Activated CD4-positive, alpha-beta memory T cell treated with anti-CD3 and anti-CD28 coated beads for 36 hours (primary cell): ENCODE measurements at regions of chr5 and their contacts with region 1.

Region 1: DNA sequence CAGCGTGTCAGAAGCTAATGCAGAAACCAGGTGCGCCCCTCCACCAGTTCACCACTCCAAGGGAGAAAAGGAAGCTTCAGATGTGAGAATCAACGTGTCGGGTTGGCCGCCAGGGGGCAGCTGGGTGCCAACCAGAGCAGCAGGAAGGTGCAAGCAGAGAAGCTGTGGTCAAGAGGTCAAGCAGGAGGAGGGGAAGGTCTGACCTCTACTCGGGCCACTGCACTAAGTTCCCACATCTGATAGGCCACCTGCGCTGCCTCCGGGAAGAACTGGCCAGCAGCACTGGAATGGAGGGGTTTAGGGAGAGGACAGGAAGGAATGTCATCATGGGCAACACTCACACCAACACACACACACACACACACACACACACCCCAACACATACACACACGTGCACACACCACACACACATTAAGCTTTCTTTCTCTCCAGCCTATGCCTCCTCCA is 31.4 kb downstream of the ANXA6 start:
- DNase-seq: peak; percentile 74
- H3K4me3 Mint-ChIP-seq: no peak overlapping the region
- H3K27ac Mint-ChIP-seq: peak overlapping the region; percentile 90
- H3K4me1 Mint-ChIP-seq: peaks cover 64% of the 10 kb centered on the region
- H3K27me3 Mint-ChIP-seq: no peaks in the 10 kb centered on the region

Region 2: DNA sequence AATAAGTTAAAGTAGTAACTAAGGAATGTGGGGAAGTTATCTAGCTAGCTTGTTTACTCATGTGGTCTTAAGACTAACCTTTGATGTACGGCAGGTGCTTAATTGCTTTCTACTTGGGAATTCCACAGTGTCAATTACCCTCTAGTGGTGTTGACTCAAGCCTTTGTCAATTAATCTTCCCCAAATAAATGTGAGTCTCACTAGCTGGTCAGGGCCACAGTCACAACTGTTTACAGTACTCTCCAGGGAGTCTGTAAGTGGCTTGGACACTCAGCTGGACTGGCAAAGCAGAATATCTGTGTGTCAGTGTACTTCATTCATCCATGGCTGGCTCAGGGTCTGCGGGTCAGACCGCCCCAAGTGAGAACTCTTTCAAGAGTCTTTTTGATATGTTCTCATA is 316.9 kb before region 1 on chr5:
- CTCF ChIA-PET with region 1: no interaction called
- POLR2A ChIA-PET with region 1: no interaction called
- intact Hi-C with region 1: no loop called
- DNase-seq: no peak
- H3K4me3 Mint-ChIP-seq: no peak overlapping the region
- H3K27ac Mint-ChIP-seq: no peak overlapping the region
- H3K4me1 Mint-ChIP-seq: peaks cover 3% of the 10 kb centered on the region
- H3K27me3 Mint-ChIP-seq: peaks cover 3% of the 10 kb centered on the region

Region 3: DNA sequence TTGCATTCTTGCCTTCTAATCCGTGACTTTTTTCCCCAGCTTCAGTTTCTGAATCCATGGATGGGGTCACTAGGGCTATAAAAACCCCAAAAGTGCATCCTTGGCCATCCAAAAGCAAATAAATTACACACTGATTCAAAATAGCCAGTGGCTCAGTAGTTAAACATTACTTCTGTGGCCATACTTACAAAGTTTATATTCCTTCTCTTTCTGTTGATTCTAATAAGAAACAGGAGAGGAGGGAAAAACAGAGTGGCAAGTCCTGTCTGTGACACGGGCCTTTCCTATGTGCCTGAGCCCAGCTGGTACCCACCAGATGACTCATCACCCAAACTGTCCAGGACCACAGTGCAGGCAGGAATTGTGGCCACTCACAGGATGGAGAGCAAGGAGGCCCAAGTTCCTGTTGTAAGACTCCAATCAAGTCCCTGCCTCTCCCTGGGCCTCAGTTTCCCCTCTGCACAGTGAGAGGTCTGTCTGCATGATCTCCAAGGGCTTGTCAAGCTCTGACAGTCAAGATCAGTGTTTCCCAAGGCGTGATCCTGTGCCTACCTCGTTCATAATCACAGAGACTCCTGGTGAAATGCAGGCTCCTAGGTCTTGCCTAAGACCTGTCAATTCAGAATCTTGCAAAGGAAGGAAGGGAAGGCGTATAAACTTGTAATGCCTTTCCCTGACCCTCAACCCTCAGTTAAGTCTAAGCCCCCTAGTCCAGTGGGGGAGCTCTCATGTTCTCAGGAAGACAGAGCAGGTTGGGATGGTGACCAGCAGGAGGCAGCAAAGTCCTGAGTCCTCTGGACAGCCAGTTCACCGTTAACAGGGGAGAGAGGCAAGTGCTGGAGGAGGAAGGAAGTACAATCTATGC is 74.9 kb before region 1 on chr5:
- CTCF ChIA-PET with region 1: interaction called, 12 read pairs
- POLR2A ChIA-PET with region 1: no interaction called
- intact Hi-C with region 1: no loop called
- DNase-seq: peak; percentile 79
- H3K4me3 Mint-ChIP-seq: no peak overlapping the region
- H3K27ac Mint-ChIP-seq: peak overlapping the region; percentile 67
- H3K4me1 Mint-ChIP-seq: peaks cover 15% of the 10 kb centered on the region
- H3K27me3 Mint-ChIP-seq: no peaks in the 10 kb centered on the region

Region 4: GRCh38 chr5:151107738-151108508 is 18.3 kb before region 1 on chr5:
- CTCF ChIA-PET with region 1: interaction called, 86 read pairs
- POLR2A ChIA-PET with region 1: no interaction called
- intact Hi-C with region 1: no loop called
- DNase-seq: no peak
- H3K4me3 Mint-ChIP-seq: no peak overlapping the region
- H3K27ac Mint-ChIP-seq: peak overlapping the region; percentile 8
- H3K4me1 Mint-ChIP-seq: no peaks in the 10 kb centered on the region
- H3K27me3 Mint-ChIP-seq: no peaks in the 10 kb centered on the region

Region 5: DNA sequence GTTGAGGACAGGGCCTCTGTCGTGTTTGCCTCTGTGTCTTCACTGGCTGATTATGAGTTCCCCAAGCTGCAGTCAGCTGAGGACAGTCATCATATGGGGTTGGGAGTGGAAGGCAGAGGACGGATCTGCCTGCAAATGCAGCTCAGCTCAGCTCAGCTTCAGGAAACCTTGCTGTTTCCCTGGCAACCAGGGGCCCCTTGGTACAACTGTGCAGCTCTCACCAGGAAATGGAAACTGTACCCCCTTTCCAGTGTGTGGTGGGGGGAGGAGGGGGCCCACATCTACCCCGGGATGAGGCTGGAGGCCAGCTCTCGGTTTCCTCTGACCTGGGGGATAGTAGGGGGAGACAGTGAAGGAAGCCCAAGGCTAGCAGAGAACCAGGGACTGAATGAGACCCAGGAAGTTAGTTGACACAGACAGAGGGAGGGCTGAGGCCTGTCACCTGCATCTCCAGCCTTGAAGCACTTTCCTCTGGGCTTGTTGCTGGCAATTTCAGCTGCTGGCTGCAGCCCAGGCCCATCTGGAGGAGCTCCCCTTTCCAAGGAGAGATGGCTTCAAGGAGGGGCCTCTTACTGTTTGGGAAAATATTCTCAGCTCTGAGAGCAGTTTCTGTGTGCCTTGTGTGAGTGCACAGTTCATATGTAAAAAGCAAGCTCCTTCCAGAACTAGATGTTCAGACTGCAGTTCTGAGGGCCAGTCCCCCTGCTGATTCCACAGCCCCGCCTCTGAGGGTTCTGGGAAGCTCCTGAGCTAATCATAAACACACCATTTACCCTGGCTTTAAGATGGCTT is 24.4 kb after region 1 on chr5:
- CTCF ChIA-PET with region 1: interaction called, 159 read pairs
- POLR2A ChIA-PET with region 1: interaction called, 8 read pairs
- intact Hi-C with region 1: loop called (anchors 1 kb)
- DNase-seq: peak; percentile 87
- H3K4me3 Mint-ChIP-seq: peak overlapping the region; percentile 36
- H3K27ac Mint-ChIP-seq: peak overlapping the region; percentile 90
- H3K4me1 Mint-ChIP-seq: peaks cover 94% of the 10 kb centered on the region
- H3K27me3 Mint-ChIP-seq: no peaks in the 10 kb centered on the region

Region 6: DNA sequence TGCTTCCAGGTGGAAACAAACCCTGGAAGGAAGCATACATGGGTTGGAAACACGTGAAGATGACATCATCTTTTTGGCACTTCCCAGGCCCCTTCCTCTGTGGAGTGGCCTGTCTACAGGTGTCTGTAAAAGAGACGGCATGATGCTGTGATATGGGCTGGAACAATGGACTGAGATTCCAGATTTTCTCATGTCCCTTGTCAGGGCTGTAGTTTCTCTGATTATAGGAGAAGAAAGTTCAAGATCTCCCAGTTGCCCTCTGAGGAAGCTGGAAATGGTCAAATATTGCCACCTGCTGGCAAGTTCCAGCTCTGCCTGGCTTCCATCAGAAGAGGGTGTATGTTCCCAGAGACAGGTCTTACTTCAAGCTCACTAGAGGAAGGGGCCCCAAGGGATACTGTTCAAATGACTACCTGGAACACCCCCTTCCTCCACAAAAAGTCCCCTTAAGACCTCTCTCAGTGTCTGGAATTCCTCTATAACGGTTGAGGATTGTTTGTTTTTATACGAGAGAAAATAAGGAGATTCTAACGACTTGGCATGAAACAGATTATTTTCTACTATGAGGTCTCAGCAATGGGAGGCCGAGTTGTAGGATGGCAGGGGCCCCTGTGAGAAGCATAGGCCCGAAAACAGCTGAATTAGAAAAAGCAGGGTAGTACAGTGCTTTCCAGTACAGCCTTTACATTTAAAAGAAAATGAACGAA is 38.6 kb after region 1 on chr5:
- CTCF ChIA-PET with region 1: interaction called, 553 read pairs
- POLR2A ChIA-PET with region 1: interaction called, 11 read pairs
- intact Hi-C with region 1: loop called (anchors 1 kb)
- DNase-seq: peak; percentile 90
- H3K4me3 Mint-ChIP-seq: no peak overlapping the region
- H3K27ac Mint-ChIP-seq: no peak overlapping the region
- H3K4me1 Mint-ChIP-seq: peaks cover 18% of the 10 kb centered on the region
- H3K27me3 Mint-ChIP-seq: no peaks in the 10 kb centered on the region

Region 7: DNA sequence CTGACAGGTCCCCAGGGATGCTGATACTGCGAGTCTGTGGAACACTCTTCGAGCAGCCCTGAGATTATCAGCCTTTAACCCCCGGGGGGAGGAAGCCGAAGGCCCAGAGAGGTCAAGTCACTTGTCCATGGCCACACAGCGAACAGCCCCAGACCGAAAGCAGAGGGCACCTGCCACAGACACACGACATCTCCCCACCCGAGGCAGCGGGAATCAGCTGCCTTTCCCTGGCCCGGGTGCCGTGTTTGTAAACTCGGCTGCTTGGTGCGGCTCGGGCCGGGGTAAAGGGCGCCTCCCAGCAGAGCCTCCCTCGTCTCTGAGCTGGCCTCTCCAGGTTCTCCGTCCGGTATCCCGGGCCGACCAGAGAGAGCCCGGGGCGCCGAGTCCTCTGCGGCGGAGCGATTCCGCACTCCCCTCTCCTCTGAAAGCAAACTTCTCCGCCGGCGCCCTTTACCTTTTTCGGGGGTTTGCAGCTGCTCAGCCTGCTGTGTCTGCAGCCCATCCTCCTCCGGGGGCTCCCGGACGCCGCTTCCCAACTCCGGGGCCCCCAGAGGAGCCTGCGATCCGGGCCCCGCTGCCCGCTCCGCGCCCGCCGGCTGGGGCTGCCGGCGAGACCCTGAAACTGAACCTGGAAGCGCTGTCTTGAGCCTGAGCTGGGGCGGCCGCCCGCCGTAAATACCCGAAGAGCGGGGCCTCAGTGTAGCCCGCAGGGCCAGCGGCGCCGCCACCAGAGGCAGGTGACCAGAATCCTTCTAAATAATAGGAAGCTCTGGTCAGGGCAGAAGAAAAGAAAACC is 97.4 kb after region 1 on chr5 and contains the start of gene CCDC69:
- CTCF ChIA-PET with region 1: interaction called, 15 read pairs
- POLR2A ChIA-PET with region 1: no interaction called
- intact Hi-C with region 1: no loop called
- DNase-seq: peak; percentile 70
- H3K4me3 Mint-ChIP-seq: peak within 1 kb of the TSS; percentile 89
- H3K27ac Mint-ChIP-seq: peak within 1 kb of the TSS; percentile 86
- H3K4me1 Mint-ChIP-seq: peaks cover 51% of the 10 kb centered on the region
- H3K27me3 Mint-ChIP-seq: no peaks in the 10 kb centered on the region
- total RNA-seq, gene CCDC69: 24.6 to 27.6 TPM

Region 8: DNA sequence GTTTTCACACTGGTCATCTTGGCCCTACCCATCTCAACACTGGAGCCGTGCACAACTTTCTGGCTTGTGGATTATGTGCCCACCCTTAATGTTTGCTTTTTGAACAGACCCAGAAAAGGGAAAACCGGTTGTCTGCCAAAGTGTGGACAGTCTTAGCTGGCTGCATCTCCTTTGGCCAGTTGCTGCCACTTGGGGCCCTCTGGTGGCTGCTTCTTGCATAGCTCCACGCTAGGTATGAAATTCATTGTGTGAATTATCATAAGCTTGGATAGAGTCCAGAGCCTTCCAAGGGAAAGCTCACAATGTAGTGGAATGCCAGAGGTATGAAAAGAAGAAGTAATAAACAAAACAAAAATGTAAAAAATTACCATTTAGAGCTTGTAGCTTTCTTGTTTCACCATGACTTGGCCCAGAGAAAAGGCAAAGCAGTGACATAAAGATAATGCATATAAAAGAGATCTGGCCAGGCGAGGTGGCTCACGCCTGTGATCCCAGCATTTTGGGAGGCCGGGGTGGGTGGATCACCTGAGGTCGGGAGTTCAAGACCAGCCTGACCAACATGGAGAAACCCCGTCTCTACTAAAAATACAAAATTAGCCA is 189.9 kb after region 1 on chr5:
- CTCF ChIA-PET with region 1: interaction called, 11 read pairs
- POLR2A ChIA-PET with region 1: no interaction called
- intact Hi-C with region 1: loop called (anchors 5 kb)
- DNase-seq: peak; percentile 76
- H3K4me3 Mint-ChIP-seq: no peak overlapping the region
- H3K27ac Mint-ChIP-seq: no peak overlapping the region
- H3K4me1 Mint-ChIP-seq: no peaks in the 10 kb centered on the region
- H3K27me3 Mint-ChIP-seq: peaks cover 2% of the 10 kb centered on the region

Region 9: DNA sequence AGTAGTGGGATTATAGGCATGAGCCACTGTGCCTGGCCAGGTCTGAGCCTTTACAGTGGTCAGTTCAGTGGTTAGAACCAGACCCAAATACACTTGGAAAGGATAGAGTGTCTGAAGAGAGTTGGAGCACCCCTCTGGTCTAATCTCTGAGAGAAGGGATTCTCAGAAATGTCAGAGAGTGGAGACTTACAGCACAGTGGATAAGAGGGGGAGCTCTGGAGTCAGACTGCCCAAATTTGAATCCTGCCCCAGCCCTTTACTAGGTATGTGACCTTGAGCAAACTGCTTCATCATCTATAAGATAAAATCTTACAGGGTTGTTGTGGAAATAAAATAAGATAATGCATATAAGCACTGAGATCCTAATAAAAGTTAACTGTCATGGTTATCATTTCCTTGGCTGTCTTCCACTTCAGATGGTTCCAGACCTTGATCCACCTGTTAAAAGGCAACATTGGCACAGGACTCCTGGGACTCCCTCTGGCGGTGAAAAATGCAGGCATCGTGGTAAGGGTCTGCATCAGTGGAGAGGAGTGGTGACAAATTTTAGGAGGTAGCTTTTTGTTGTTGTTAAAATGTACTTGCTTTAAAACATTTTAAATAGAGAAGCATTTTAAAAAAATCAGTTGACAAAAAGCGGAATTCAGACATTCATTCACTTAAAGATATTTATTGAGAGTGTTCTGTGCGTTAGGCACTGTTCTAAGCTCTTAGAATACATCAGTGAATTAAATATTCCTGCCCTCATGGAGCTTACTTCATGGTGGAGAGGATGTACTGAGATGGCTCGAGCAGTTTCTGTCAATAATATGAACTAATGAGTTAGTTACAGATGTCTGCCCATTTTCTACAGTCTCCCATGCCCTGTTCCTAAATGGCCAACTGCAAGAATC is 337.2 kb after region 1 on chr5:
- CTCF ChIA-PET with region 1: no interaction called
- POLR2A ChIA-PET with region 1: no interaction called
- intact Hi-C with region 1: no loop called
- DNase-seq: no peak
- H3K4me3 Mint-ChIP-seq: no peak overlapping the region
- H3K27ac Mint-ChIP-seq: no peak overlapping the region
- H3K4me1 Mint-ChIP-seq: no peaks in the 10 kb centered on the region
- H3K27me3 Mint-ChIP-seq: no peaks in the 10 kb centered on the region

Region 10: DNA sequence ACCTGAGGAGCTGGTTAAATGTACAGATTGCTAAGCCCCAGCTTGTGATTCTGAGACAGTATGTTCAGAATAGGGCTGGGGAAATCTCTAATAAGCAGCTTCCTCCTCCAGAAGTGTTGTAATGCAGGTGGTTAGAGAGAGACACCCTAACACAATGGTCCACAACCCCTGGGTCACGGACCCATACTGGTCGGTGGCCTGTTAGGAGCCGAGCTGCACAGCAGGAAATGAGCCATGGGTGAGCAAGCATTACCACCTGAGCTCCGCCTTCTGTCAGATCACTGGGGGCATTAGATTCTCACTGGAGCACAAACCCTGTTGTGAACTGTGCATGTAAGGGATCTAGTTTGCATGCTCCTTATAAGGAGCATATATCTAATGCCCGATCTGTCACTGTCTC is 383.0 kb after region 1 on chr5:
- CTCF ChIA-PET with region 1: no interaction called
- POLR2A ChIA-PET with region 1: no interaction called
- intact Hi-C with region 1: no loop called
- DNase-seq: no peak
- H3K4me3 Mint-ChIP-seq: no peak overlapping the region
- H3K27ac Mint-ChIP-seq: no peak overlapping the region
- H3K4me1 Mint-ChIP-seq: no peaks in the 10 kb centered on the region
- H3K27me3 Mint-ChIP-seq: no peaks in the 10 kb centered on the region